Activated CD8-positive, alpha-beta T cell treated with anti-CD3 and anti-CD28 coated beads, Interleukin-2, amount 10 ng/mL, durations not matched to agents 7 days and 5 days (primary cell): ENCODE measurements at regions of chr15 and their contacts with region 1.

Region 1: DNA sequence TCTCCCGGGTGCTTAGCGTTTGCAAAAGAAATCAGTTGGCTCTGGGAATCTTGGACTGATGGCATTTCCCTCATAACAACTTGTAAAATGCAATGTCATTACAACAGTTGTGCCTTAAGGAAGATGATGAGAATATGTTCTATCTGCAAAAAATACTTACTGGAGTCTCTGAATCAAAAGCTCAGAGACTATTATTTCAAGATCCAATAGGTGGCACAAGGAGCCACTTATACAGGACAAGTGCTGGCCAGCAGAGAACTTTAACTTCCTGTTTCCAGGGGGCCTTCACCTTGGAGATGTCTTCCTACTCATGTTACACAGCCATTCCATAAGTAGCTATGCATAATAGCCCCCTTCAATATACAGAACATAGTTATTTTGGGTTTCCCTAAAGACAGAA is 8.9 kb upstream of the RPS27L start:
- DNase-seq: no peak
- ATAC-seq: no peak
- H3K4me3 Mint-ChIP-seq: no peak overlapping the region
- H3K27ac Mint-ChIP-seq: no peak overlapping the region
- H3K4me1 Mint-ChIP-seq: peaks cover 4% of the 10 kb centered on the region
- H3K27me3 Mint-ChIP-seq: no peaks in the 10 kb centered on the region

Region 2: GRCh38 chr15:63178030-63178429 is 11.8 kb after region 1 on chr15:
- CTCF ChIA-PET with region 1: interaction called, 25 read pairs
- POLR2A ChIA-PET with region 1: no interaction called
- DNase-seq: no peak
- ATAC-seq: no peak
- H3K4me3 Mint-ChIP-seq: no peak overlapping the region
- H3K27ac Mint-ChIP-seq: no peak overlapping the region
- H3K4me1 Mint-ChIP-seq: no peaks in the 10 kb centered on the region
- H3K27me3 Mint-ChIP-seq: no peaks in the 10 kb centered on the region

Region 3: DNA sequence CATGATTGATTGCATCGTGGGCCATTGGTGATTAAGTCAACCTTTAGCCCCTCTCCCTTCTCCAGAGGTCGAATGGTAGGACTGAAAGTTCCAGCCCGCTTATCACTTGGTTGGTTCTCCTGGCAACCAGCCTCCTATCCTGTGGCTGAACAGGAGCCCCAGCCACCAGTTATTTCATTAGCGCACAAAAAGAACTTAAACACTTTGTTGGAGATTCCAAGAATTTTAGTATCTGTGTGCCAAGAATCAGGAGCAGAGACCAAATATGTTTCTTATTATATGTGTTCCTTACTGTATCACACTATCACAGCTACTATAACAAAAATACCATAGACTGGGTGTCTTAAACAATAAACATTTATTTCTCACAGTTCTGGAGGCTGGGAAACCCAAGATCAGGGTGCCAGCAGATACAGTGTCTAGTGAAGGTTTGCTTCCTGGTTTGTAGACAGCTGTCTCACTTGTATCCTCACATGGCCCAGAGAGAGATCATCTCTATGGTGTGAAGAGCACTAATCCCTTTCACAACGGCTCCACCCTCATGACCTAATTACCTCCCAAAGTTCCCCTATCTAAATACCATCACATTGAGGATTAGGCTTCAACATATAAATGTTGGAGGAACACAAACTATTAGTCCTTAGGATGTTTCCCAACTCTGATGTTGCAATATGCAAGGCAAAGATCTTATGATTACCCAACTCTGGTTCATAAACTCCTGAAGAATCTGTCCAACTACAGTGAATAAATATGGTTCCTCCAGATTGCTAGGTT is 80.7 kb after region 1 on chr15:
- CTCF ChIA-PET with region 1: interaction called, 11 read pairs
- POLR2A ChIA-PET with region 1: no interaction called
- DNase-seq: no peak
- ATAC-seq: no peak
- H3K4me3 Mint-ChIP-seq: no peak overlapping the region
- H3K27ac Mint-ChIP-seq: no peak overlapping the region
- H3K4me1 Mint-ChIP-seq: peaks cover 38% of the 10 kb centered on the region
- H3K27me3 Mint-ChIP-seq: no peaks in the 10 kb centered on the region

Region 4: GRCh38 chr15:63288778-63289378 is 122.7 kb after region 1 on chr15:
- CTCF ChIA-PET with region 1: interaction called, 10 read pairs
- POLR2A ChIA-PET with region 1: no interaction called
- DNase-seq: no peak
- ATAC-seq: peak; percentile 68
- H3K4me3 Mint-ChIP-seq: no peak overlapping the region
- H3K27ac Mint-ChIP-seq: no peak overlapping the region
- H3K4me1 Mint-ChIP-seq: peaks cover 8% of the 10 kb centered on the region
- H3K27me3 Mint-ChIP-seq: no peaks in the 10 kb centered on the region